ENCODE measurements at regions of chr9 and their contacts with region 1.

Region 1: DNA sequence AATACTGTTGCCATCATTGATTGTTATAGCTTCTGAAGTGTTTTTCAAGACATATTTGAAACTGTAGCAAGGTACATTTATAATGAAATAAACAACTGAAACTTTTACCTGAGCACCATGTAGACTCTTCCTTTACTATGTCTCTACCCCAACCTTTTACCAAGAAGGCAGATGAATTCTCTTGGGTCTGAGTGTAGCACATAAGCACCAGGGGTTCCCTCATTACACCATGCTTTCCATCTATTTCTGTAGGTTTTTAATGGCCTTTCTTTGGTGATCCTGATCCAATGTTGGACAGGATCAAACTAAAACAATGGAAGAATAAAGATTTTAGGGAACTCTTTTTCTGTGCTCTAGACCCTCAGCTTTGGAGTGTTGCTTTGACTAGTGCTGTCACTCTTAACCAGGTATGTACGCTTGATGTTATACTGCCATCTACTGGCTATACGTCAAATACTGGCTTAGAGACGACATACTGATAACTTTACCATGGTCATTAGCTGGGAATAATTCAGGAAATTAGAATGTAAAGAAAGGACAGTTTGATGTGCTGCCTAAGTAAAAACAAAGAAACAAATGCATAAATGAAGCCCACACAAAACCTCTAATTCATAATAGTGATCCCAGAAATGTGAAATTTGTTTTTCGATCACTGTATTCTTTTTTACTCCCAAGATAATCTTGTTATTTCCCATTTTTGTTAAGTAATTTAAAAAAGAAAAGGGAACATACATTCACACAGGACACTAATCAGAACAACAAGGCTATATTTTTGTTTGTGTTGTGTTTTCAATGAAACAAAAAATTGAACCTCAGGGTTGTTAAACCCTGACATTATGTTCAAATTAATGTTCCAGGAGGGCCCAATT is 30.7 kb downstream of the IFNW1 start:
- DNase-seq: peak in 2 of 5 donors; percentile 59
- H3K4me3 ChIP-seq: no peak overlapping the region
- H3K4me3 Mint-ChIP-seq: no peak overlapping the region
- H3K27ac ChIP-seq: no peak overlapping the region
- H3K27ac Mint-ChIP-seq: peak overlapping the region in 1 of 8 donors; percentile 15
- H3K4me1 ChIP-seq: no peaks in the 10 kb centered on the region
- H3K4me1 Mint-ChIP-seq: peaks cover 0 to 3% (median 0%) of the 10 kb centered on the region in 3 donors
- H3K27me3 ChIP-seq: no peaks in the 10 kb centered on the region
- H3K27me3 Mint-ChIP-seq: peaks cover 0 to 3% of the 10 kb centered on the region in 2 donors

Region 2: DNA sequence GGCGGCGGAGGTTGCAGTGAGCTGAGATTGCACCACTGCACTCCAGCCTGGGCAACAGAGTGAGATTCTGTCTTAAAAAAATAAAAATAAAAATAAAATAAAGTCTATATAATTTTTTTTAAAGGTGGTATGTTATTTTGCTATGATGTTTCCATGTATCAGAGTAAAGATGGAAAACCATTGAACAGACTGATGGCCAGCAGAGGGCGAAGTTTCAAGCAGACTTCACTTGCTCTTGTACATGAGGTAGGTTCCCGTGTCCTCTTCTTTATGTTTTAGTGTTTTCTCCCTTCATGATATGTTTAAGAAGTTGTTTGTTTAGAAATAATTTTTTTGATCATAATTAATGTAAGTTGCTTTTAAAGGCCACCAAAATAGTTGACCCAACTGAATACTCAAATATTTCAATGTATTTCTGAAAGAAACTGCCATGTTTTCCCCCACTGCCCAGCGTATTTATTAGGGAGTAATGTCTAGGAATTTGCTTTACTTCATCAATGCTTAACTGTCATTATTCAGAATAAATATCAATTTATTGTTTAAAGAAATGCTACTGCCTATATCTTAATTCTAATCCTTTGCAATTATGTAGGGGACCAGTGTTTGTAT is 225.9 kb before region 1 on chr9:
- CTCF ChIA-PET with region 1: interaction called, 22 read pairs
- POLR2A ChIA-PET with region 1: no interaction called
- DNase-seq: peak; percentile 20 to 71 (median 38)
- H3K4me3 ChIP-seq: no peak overlapping the region
- H3K4me3 Mint-ChIP-seq: no peak overlapping the region
- H3K27ac ChIP-seq: no peak overlapping the region
- H3K27ac Mint-ChIP-seq: no peak overlapping the region
- H3K4me1 ChIP-seq: no peaks in the 10 kb centered on the region
- H3K4me1 Mint-ChIP-seq: no peaks in the 10 kb centered on the region
- H3K27me3 ChIP-seq: no peaks in the 10 kb centered on the region
- H3K27me3 Mint-ChIP-seq: no peaks in the 10 kb centered on the region

Region 3: DNA sequence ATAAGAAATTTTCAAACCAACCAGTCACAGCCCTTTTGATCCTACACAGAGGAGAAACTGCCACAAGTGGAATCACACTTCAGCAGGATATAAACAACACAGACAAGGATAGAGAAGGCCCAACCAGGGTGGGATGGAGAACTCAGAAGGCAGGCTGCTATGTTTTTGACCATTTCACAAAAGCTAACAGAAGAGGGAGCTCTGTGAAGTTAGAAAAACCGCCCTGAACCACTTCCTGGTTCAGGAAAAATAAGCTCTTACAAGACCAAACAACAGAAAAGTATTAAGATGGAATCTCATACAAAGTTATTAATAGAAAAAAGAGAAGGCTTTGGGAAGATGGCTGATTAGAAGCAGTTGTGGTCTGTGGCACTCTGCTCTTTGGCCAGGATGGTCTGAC is 32.2 kb before region 1 on chr9:
- CTCF ChIA-PET with region 1: interaction called, 33 read pairs
- POLR2A ChIA-PET with region 1: no interaction called
- DNase-seq: no peak
- H3K4me3 ChIP-seq: no peak overlapping the region
- H3K4me3 Mint-ChIP-seq: no peak overlapping the region
- H3K27ac ChIP-seq: no peak overlapping the region
- H3K27ac Mint-ChIP-seq: peak overlapping the region in 3 of 8 donors; percentile 12 to 74 (median 16)
- H3K4me1 ChIP-seq: peaks cover 15% of the 10 kb centered on the region
- H3K4me1 Mint-ChIP-seq: peaks cover 21 to 31% (median 29%) of the 10 kb centered on the region in 3 donors
- H3K27me3 ChIP-seq: no peaks in the 10 kb centered on the region
- H3K27me3 Mint-ChIP-seq: peaks cover 0 to 3% of the 10 kb centered on the region in 2 donors

Region 4: DNA sequence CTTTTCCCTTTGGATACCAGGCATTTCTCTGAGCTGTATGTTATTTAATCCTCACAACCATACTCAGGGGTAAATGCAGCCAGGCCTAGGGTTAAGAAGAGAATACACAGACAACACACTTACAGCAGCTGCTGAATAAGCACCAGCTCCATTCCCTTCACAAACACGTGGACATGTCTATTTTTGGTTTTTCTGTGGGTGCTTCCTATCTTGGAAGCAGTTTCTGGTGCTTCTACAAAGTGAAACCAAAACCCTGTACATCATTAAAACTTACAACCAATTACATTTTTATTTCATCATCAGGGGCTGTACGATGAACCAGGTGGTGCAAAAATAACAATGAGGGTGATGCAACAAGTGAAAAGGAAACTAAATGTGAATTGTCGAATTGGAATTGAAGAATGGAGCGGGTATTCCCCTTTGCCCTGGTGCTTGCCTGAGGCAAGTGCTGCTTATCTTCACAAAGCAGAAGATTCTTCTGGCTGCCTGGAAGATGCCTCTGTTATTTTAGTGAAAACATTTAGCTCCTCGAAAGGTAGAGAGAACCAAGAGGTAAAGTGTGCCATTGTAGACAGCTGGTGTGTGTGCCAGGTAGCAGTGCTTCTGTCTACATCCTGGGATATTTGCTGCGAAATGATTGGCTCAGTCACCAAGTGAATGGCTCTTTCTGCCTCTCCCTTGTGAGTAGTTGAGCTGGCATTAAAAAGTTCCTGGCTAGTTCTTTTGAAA is 14.6 kb before region 1 on chr9:
- CTCF ChIA-PET with region 1: interaction called, 13 read pairs
- POLR2A ChIA-PET with region 1: interaction called, 4 read pairs
- DNase-seq: peak; percentile 9 to 72 (median 57)
- H3K4me3 ChIP-seq: peak overlapping the region; percentile 68
- H3K4me3 Mint-ChIP-seq: peak overlapping the region; percentile 22 to 90 (median 75)
- H3K27ac ChIP-seq: peak overlapping the region; percentile 47
- H3K27ac Mint-ChIP-seq: peak overlapping the region; percentile 86 to 95 (median 90)
- H3K4me1 ChIP-seq: peaks cover 17% of the 10 kb centered on the region
- H3K4me1 Mint-ChIP-seq: peaks cover 28 to 44% (median 43%) of the 10 kb centered on the region in 3 donors
- H3K27me3 ChIP-seq: no peaks in the 10 kb centered on the region
- H3K27me3 Mint-ChIP-seq: no peaks in the 10 kb centered on the region

Measured in CD8-positive, alpha-beta memory T cell (primary cell).